ENCODE measurements at regions of chr1 and their contacts with region 1.

Region 1: DNA sequence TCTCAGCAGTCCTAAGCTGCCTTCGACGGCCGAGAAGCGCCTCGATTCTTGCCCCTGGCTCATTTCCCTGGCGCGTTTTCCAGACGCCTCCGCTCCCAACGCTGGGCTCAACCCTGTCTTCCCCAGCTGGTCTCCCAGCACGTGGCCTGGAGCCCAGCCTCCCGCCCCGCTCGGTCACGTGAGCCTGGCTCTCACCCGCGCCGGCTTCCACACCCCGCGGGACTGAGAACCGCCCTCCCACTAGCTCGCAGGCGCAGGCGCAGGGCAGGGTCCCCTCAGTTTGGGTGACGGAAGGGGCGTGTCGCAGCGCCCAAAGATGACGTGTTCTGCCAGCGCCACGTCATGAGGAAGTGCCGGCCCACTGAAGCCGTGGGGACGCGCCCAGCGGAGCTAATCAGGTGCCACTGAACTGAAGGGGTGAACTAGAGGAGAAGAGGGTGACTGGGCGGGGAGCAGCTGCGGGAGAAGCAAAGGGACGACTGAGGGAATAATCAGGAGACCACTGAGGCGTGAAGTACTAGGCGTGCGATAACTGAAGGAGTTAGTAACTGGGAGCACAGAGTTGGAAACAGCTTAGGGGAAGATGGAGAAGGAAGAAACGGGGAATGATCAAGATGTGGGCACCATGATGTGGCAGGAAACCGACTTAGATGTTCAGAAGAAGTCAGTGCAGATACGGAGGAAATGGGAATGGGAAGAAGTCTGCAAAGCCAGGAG is at the start of gene DHDDS:
- DNase-seq: peak; percentile 97
- H3K4me3 ChIP-seq: peak within 1 kb of the TSS; percentile 78
- H3K4me3 Mint-ChIP-seq: peak within 1 kb of the TSS; percentile 95
- H3K27ac Mint-ChIP-seq: peak within 1 kb of the TSS; percentile 94
- H3K4me1 ChIP-seq: peaks cover 6% of the 10 kb centered on the region
- H3K4me1 Mint-ChIP-seq: no peaks in the 10 kb centered on the region
- H3K27me3 ChIP-seq: no peaks in the 10 kb centered on the region
- H3K27me3 Mint-ChIP-seq: no peaks in the 10 kb centered on the region
- CTCF ChIP-seq: no peak
- total RNA-seq, gene DHDDS: 46.9 and 55.6 TPM in 2 replicates

Region 2: GRCh38 chr1:25754470-25755181 is 677.5 kb before region 1 on chr1:
- CTCF ChIA-PET with region 1: no interaction called
- POLR2A ChIA-PET with region 1: no interaction called
- intact Hi-C with region 1: no loop called
- DNase-seq: no peak
- H3K4me3 ChIP-seq: no peak overlapping the region
- H3K4me3 Mint-ChIP-seq: no peak overlapping the region
- H3K27ac Mint-ChIP-seq: no peak overlapping the region
- H3K4me1 ChIP-seq: no peaks in the 10 kb centered on the region
- H3K4me1 Mint-ChIP-seq: no peaks in the 10 kb centered on the region
- H3K27me3 ChIP-seq: no peaks in the 10 kb centered on the region
- H3K27me3 Mint-ChIP-seq: no peaks in the 10 kb centered on the region
- CTCF ChIP-seq: no peak

Region 3: GRCh38 chr1:26351591-26352337 is 80.4 kb before region 1 on chr1:
- CTCF ChIA-PET with region 1: no interaction called
- POLR2A ChIA-PET with region 1: interaction called, 3 read pairs
- intact Hi-C with region 1: loop called (anchors 5 kb)
- DNase-seq: peak; percentile 87 to 95
- H3K4me3 ChIP-seq: peak overlapping the region; percentile 54
- H3K4me3 Mint-ChIP-seq: peak overlapping the region; percentile 79
- H3K27ac Mint-ChIP-seq: peak overlapping the region; percentile 100
- H3K4me1 ChIP-seq: peaks cover 64% of the 10 kb centered on the region
- H3K4me1 Mint-ChIP-seq: peaks cover 24% of the 10 kb centered on the region
- H3K27me3 ChIP-seq: no peaks in the 10 kb centered on the region
- H3K27me3 Mint-ChIP-seq: no peaks in the 10 kb centered on the region
- CTCF ChIP-seq: no peak